ENCODE measurements at regions of chr1 and their contacts with region 1.

Region 1: GRCh38 chr1:99707535-99708142 is 58.8 kb downstream of the FRRS1 start:
- DNase-seq: peak; percentile 56 to 74 (median 58)
- ATAC-seq: peak; percentile 89
- H3K4me3 ChIP-seq: no peak overlapping the region
- H3K27ac ChIP-seq: no peak overlapping the region
- H3K4me1 ChIP-seq: peaks cover 2 to 6% of the 10 kb centered on the region in 2 experiments; a peak in 4 of 5 replicates
- H3K27me3 ChIP-seq: no peaks in the 10 kb centered on the region
- CTCF ChIP-seq: peak; percentile 64 to 86 (median 86)
- EP300 ChIP-seq: no peak
- POLR2A ChIP-seq: no peak
- RAD21 ChIP-seq: peak; percentile 83 to 87

Region 2: DNA sequence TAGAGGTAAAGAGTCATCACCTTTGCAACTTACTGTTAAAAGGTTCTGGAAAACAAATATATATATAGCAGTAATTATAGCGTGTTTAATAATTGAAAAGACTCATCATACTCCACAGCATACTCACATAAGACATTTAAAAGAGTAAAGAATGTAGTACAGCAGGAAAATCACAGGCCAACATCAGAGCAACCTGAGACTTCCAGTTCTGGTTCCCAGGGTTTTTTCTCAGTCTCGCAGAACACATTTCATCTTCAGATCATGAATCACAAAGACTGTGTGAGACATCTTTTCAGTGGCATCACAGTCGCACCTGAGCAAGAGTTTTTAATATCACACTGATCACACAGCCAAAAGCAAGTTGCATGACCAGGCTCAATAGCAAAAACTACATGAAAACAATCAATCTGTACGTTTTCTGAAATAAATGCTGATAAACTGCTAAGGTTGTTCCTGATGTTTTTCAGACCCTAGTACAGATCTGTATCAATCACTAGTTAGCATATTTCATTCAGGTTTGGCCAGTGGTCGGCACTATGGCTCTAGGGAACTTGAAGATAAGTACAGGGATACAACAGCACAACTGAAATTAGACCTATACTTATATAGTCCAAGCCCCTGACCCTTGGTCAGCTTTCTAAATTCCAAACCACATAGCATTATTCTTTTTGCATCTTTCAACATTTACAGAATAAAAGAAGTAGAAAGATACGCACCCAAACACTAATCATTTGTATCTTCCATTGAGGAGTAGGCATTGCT is 300.8 kb before region 1 on chr1:
- CTCF ChIA-PET with region 1: no interaction called
- POLR2A ChIA-PET with region 1: no interaction called
- in situ Hi-C with region 1: no loop called
- intact Hi-C with region 1: no loop called
- DNase-seq: peak in 1 of 4 experiments; percentile 3
- ATAC-seq: peak; percentile 61; the same call in 2 of the 3 replicates
- H3K4me3 ChIP-seq: no peak overlapping the region
- H3K27ac ChIP-seq: no peak overlapping the region
- H3K4me1 ChIP-seq: no peaks in the 10 kb centered on the region
- H3K27me3 ChIP-seq: no peaks in the 10 kb centered on the region
- CTCF ChIP-seq: no peak
- EP300 ChIP-seq: no peak
- POLR2A ChIP-seq: no peak
- RAD21 ChIP-seq: peak in 1 of 2 experiments; percentile 24; a peak in 1 of 4 replicates

Region 3: GRCh38 chr1:99533909-99534637 is 173.6 kb before region 1 on chr1:
- CTCF ChIA-PET with region 1: no interaction called
- POLR2A ChIA-PET with region 1: no interaction called
- in situ Hi-C with region 1: no loop called
- intact Hi-C with region 1: loop called (anchors 10 kb)
- DNase-seq: no peak
- ATAC-seq: no peak; the same call in 2 of the 3 replicates
- H3K4me3 ChIP-seq: no peak overlapping the region
- H3K27ac ChIP-seq: peak overlapping the region; percentile 48; the same call in 1 of the 3 replicates
- H3K4me1 ChIP-seq: peaks cover 0 to 9% of the 10 kb centered on the region in 2 experiments; a peak in 2 of 5 replicates
- H3K27me3 ChIP-seq: no peaks in the 10 kb centered on the region
- CTCF ChIP-seq: no peak
- EP300 ChIP-seq: no peak
- POLR2A ChIP-seq: no peak
- RAD21 ChIP-seq: no peak

Measured in K562 (cell line).